A549 (cell line): ENCODE measurements at regions of chr20 and their contacts with region 1.

Region 1: GRCh38 chr20:25178563-25179438 is 16.7 kb upstream of the ENTPD6 start:
- DNase-seq: peak; percentile 84 to 89
- ATAC-seq: peak; percentile 94 to 98
- H3K4me3 ChIP-seq: no peak overlapping the region
- H3K27ac ChIP-seq: peak overlapping the region; percentile 65 to 74
- H3K4me1 ChIP-seq: peaks cover 34% of the 10 kb centered on the region
- CTCF ChIP-seq: peak; percentile 99
- EP300 ChIP-seq: peak; percentile 41 to 73; a peak in 2 of 5 replicates
- POLR2A ChIP-seq: no peak
- RAD21 ChIP-seq: peak; percentile 100

Region 2: DNA sequence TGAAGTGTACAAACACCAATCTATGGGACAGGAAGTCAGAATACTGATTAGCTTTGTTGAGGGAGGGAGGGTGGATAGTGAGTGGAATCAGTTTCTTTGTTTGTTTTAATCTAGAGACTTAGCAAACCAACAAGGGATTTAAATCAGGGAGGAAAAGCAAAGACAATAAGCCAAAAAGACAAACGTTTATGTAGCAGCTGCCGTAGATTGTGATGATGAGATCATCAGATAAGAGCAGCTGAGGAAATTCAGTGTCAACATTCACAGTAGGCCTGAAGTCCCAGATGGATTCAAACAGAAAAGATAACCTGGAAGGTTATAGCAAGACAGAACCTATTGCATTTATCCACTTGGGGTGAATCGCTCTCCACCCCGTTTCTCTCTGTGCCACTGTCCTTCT is 814.3 kb before region 1 on chr20:
- CTCF ChIA-PET with region 1: no interaction called
- POLR2A ChIA-PET with region 1: no interaction called
- DNase-seq: no peak
- ATAC-seq: no peak
- H3K4me3 ChIP-seq: no peak overlapping the region
- H3K27ac ChIP-seq: no peak overlapping the region
- H3K4me1 ChIP-seq: no peaks in the 10 kb centered on the region
- CTCF ChIP-seq: no peak
- EP300 ChIP-seq: no peak
- POLR2A ChIP-seq: no peak
- RAD21 ChIP-seq: no peak

Region 3: DNA sequence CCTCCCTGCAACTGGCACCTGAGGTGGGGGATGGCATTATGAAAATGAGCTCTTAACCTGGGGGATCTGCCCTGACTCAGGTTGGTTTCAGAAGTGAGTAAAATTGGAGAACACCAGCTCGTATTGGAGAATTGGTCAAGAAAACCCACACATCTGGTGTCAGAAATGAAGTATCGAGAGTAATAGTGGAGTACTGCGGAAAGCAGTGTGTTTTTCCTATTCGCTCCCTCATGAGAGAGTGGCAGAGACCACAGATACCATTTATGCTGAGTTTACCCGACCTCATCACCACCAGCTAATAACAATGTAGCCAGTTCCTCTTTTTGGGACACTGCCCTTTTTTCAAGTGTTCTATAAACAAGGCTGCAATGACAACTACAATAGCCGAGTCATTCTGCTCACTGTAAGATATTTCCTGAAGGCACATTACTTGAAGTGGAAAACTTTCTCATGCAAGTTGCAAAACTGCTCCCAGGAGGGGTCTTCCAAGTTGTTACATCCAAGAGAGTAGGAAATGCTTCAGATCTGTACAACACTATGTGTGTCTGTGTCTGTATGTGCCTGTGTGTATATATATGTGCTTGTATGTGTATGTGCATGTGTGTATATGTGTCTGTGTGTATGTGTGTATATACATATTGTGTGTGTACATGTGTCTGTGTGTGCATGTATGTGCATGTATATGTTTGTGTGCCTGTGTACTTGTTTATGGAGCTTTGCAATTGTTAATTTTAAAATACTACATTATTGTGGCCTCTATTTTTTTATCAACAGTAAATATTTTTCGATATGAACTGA is 335.7 kb before region 1 on chr20:
- CTCF ChIA-PET with region 1: no interaction called
- POLR2A ChIA-PET with region 1: no interaction called
- DNase-seq: no peak
- ATAC-seq: no peak; a peak in 1 of 6 replicates
- H3K4me3 ChIP-seq: no peak overlapping the region
- H3K27ac ChIP-seq: no peak overlapping the region
- H3K4me1 ChIP-seq: no peaks in the 10 kb centered on the region
- CTCF ChIP-seq: no peak
- EP300 ChIP-seq: no peak
- POLR2A ChIP-seq: no peak
- RAD21 ChIP-seq: no peak

Region 4: DNA sequence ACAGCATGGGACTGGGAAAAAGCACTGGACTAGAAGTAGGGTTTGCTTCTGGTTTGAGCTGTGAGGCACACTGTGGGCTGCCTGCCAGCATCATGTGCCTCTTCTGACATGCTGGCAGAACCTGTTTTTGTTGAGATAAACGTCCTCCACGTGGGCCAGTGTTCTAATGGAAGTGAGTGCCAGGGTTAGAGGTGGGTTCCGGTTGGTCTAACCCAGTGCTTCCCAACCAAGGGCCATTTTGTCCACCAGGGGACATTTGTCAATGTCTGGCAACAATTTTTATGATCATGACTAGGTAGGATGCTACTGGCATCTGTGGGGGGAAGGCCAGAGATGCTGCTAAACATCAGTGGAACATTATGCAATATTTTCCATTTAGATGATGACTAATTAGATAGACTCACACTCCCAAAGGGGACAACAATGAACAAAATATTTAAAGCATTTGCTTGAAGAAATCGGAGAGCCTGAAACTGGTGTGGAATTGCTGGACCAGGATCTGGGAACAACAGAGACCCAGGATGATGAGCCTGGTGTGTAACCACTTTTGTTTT is 178.5 kb before region 1 on chr20:
- CTCF ChIA-PET with region 1: interaction called, 67 read pairs
- POLR2A ChIA-PET with region 1: no interaction called
- DNase-seq: peak; percentile 24 to 35
- ATAC-seq: peak; percentile 57 to 58; a peak in 5 of 6 replicates
- H3K4me3 ChIP-seq: no peak overlapping the region
- H3K27ac ChIP-seq: peak overlapping the region; percentile 14 to 43; a peak in 3 of 6 replicates
- H3K4me1 ChIP-seq: peaks cover 22% of the 10 kb centered on the region; the same call in 2 of the 3 replicates
- CTCF ChIP-seq: no peak
- EP300 ChIP-seq: no peak; a peak in 1 of 5 replicates
- POLR2A ChIP-seq: no peak
- RAD21 ChIP-seq: no peak

Region 5: GRCh38 chr20:25058051-25058871 is 120.5 kb before region 1 on chr20 and contains the start of gene ACSS1:
- CTCF ChIA-PET with region 1: interaction called, 15 read pairs
- POLR2A ChIA-PET with region 1: no interaction called
- DNase-seq: peak; percentile 54 to 72
- ATAC-seq: peak; percentile 66 to 68
- H3K4me3 ChIP-seq: peak within 1 kb of the TSS; percentile 90
- H3K27ac ChIP-seq: peak within 1 kb of the TSS; percentile 88 to 89
- H3K4me1 ChIP-seq: peaks cover 48% of the 10 kb centered on the region
- CTCF ChIP-seq: no peak
- EP300 ChIP-seq: no peak
- POLR2A ChIP-seq: peak; percentile 69
- RAD21 ChIP-seq: no peak
- polyA plus RNA-seq, gene ACSS1: 7.2 and 8.5 TPM in 2 replicates

Region 6: DNA sequence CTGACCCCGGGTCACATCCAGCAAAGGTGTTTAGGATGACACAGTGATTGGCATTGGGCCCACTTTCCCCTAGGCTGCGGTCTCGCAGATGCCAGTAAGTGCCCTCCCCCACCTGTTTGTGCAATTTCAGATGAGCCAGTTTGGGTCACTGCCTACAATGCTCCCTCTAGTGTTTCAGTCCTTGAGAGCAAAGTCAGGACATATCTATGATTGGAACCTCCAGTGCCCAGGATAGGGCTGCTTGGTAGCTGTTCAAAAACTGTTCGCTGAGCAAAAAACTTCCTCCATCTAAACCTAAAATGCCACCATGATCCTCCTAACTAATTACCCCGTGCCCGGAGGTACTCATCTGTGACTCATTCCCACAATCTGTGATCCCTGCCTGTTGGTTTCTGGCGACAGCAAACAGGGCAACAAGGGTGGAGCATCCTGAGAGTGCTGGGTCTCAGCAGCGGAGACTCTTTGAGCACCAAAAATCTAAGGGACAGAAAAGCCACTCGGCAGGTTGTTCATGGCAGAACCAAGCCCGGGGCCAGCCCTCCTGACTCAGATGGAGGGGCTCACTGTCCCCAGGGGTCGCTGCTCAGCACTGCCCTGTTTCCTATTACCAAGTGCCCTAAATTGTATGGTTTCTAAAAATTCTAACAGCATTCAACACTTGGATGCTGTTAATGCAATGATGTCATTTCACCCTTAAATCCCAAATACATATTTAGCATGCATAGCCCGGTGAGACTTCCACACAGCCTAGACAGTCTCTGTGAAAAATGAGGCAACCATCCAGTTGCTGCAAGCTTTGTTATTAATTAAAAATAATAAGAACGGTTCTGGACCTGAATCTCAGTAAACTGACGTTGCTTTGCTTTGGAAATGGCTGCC is 101.8 kb before region 1 on chr20:
- CTCF ChIA-PET with region 1: interaction called, 22 read pairs
- POLR2A ChIA-PET with region 1: interaction called, 4 read pairs
- DNase-seq: peak; percentile 80 to 89
- ATAC-seq: peak; percentile 72 to 80
- H3K4me3 ChIP-seq: peak overlapping the region; percentile 40
- H3K27ac ChIP-seq: peak overlapping the region; percentile 71 to 80
- H3K4me1 ChIP-seq: peaks cover 40% of the 10 kb centered on the region
- CTCF ChIP-seq: peak; percentile 60
- EP300 ChIP-seq: peak in 1 of 2 experiments; percentile 17; a peak in 1 of 5 replicates
- POLR2A ChIP-seq: no peak
- RAD21 ChIP-seq: peak; percentile 44 to 53; a peak in 3 of 5 replicates

Region 7: GRCh38 chr20:25139036-25139705 is 39.6 kb before region 1 on chr20:
- CTCF ChIA-PET with region 1: interaction called, 10 read pairs
- POLR2A ChIA-PET with region 1: no interaction called
- DNase-seq: peak in 1 of 2 experiments; percentile 51
- ATAC-seq: 0 out of 6 replicates have a peak, but pooled peaks of 1 of the 2 experiments have one; percentile 19
- H3K4me3 ChIP-seq: no peak overlapping the region
- H3K27ac ChIP-seq: peak overlapping the region in 1 of 2 experiments; percentile 86; a peak in 1 of 6 replicates
- H3K4me1 ChIP-seq: peaks cover 39% of the 10 kb centered on the region
- CTCF ChIP-seq: peak; percentile 22; the same call in 2 of the 3 replicates
- EP300 ChIP-seq: no peak
- POLR2A ChIP-seq: no peak
- RAD21 ChIP-seq: peak in 1 of 2 experiments; percentile 45; a peak in 2 of 5 replicates

Region 8: DNA sequence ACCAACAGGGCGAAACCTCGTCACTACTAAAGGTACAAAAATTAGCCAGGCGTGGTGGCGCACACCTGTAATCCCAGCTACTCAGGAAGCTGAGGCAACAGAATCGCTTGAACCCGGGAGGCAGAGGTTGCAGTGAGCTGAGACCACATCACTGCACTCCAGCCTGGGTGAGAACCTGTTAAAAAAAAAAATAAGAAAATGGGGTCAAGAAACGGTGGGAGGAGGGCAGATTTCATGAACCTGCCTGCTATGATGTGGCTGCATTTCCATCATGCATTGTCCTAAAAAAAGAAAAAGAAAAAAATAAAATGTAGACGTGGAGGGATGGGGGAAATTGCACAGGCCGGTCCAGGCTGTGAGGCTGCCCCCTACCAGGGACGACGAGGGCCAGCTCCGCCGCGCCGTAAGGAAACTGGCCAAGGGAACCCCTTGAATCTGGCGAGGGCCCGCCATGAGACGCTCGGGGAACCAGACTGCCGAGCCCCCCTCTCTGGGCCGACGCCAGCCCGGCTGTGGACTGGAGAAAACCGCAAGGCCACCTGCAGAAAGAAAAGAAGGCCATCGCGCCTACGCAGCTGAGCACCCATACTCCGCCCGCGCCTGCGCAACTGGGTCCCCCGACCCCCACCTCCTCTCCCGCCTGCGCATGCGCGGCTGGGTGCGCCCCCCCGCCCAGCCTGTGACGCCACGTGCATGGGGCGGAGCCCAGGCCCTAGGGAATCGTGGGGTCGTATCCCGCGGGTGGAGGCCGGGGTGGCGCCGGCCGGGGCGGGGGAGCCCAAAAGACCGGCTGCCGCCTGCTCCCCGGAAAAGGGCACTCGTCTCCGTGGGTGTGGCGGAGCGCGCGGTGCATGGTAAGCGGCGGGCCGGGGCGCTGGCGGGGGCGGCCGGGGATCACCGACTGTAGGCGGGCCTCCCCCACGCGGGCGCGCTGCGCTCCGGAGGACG is 16.5 kb after region 1 on chr20 and contains the start of gene ENTPD6:
- CTCF ChIA-PET with region 1: interaction called, 14 read pairs
- POLR2A ChIA-PET with region 1: interaction called, 3 read pairs
- DNase-seq: peak; percentile 93 to 98
- ATAC-seq: peak; percentile 84 to 89
- H3K4me3 ChIP-seq: peak within 1 kb of the TSS; percentile 95
- H3K27ac ChIP-seq: peak within 1 kb of the TSS; percentile 92 to 94
- H3K4me1 ChIP-seq: peaks cover 28% of the 10 kb centered on the region
- CTCF ChIP-seq: peak; percentile 46
- EP300 ChIP-seq: no peak
- POLR2A ChIP-seq: peak; percentile 94
- RAD21 ChIP-seq: peak; percentile 13 to 35; a peak in 3 of 5 replicates
- polyA plus RNA-seq, gene ENTPD6: 85.7 and 95.4 TPM in 2 replicates

Region 9: DNA sequence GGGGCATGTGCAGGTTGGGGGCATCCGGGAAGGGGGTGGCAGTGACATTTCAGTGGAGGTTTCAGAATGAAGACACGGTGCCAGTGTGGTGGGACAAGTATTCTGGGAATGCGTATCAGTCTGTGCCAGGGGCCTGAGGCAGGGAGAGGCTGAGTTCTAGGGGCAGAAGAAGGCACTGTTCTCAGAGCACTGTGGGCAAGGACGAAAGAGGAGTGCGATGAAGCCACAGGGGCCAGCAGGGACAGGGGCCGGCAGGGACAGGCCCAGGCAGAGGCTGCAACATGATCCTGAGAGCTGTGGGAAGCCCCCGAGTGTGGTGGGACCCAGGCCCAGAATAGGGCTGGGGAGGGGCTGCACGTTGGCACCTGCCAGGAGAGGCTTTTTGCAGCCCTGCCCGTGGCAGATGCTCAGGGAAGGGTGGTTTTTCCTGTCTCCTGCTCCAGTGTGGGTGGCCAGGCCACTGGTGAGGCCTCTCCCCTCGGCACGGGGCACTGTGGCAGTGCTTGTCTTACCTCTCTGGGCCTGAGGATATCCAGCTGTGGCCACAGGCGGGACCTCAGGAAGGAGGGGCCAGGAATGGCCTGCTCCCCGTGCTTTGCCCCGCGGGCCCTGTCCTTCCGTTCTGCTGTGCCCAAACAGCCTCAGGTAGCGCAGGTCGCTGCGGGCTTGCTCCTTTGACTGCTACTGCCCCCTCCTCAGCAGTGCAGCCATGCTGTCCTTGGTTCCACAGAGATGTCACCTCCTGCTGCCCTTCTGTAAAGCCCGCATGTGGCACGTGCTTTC is 26.7 kb after region 1 on chr20:
- CTCF ChIA-PET with region 1: no interaction called
- POLR2A ChIA-PET with region 1: no interaction called
- DNase-seq: no peak
- ATAC-seq: peak; percentile 14 to 45; a peak in 3 of 6 replicates
- H3K4me3 ChIP-seq: no peak overlapping the region
- H3K27ac ChIP-seq: peak overlapping the region in 1 of 2 experiments; percentile 32; a peak in 2 of 6 replicates
- H3K4me1 ChIP-seq: peaks cover 25% of the 10 kb centered on the region
- CTCF ChIP-seq: no peak
- EP300 ChIP-seq: no peak
- POLR2A ChIP-seq: no peak
- RAD21 ChIP-seq: no peak